Sciatic nerve (tissue), 2 donors: ENCODE measurements at regions of chr6 and their contacts with region 1.

Region 1: DNA sequence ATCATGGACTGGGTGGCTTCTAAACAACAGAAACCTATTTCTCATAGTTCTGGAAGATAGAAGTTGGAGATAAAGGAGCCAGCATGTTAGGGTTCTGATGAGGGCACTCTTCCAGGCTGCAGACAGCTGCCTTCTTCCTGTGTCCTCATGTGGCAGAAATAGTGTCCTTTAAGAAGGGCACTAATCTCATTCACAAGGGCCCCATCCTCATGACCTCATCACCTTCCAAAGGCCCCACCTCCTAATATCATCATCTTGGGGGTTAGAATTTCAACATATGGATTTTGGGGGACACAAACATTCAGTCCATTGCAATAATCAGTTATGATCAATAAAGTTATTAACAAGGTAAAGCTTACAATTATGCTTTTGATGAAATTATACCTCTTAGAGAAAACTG is 130.8 kb upstream of the SLC22A23 start:
- DNase-seq: no peak
- ATAC-seq: no peak

Region 2: GRCh38 chr6:3623451-3624249 is 36.0 kb after region 1 on chr6:
- intact Hi-C with region 1: loop called (anchors 1 kb)
- DNase-seq: no peak
- ATAC-seq: no peak